Activated B cell treated with CpG ODN at 0.5 μM for 24 hours (primary cell): ENCODE measurements at regions of chr6 and their contacts with region 1.

Region 1: GRCh38 chr6:139028658-139029469 is at the start of gene ABRACL:
- DNase-seq: peak; percentile 83
- ATAC-seq: peak; percentile 71
- H3K4me3 Mint-ChIP-seq: no peak within 1 kb of the TSS
- H3K27ac Mint-ChIP-seq: peak within 1 kb of the TSS; percentile 95
- H3K4me1 Mint-ChIP-seq: peaks cover 14% of the 10 kb centered on the region
- H3K27me3 Mint-ChIP-seq: no peaks in the 10 kb centered on the region
- CTCF ChIP-seq: no peak
- total RNA-seq, gene ABRACL: 63.5 and 63.8 TPM in 2 replicates

Region 2: DNA sequence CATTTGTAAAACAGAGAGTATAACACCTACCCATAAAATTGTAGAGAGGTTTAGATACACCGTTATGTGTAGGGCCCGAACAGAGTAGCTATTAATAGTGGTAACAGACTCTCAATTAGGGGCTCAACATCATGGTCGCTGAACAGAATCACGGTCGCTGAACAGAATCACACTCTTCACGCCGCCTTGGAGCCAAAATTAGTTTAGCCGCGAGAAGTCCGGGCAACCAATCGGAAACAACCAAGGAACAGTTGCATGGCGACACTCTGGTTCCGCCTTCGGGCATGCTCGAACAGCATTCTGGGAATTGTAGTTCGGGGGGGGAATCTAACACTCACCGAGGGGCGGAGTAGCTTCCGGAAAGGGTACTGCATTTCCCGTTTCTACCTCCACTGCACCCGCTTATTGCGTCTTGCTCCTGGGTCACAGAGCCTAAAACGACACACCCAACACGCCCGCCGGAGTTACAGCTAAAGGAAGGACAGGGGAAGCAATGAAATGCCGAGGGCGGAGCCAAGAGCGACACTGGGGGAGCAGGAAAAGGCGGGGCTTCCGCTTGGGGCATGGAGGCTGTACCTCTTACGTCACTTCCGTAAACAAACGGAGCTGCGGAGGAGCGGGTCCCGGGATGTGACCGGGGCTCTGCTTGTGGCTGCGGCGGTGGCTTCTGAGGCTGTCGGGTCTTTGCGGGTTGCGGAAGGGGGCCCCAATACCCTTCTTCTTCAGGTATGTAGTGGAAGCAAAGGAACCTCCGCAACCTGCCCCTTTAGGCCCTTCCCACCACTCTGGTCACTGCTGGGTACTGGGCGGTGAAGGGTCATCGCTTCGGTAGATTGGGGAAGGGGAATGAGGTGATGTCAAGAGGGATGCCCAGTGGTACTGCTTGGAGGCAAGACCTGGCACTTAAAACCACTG is 255.4 kb before region 1 on chr6 and contains the start of gene CCDC28A:
- CTCF ChIA-PET with region 1: no interaction called
- POLR2A ChIA-PET with region 1: interaction called, 14 read pairs
- intact Hi-C with region 1: loop called (anchors 1 kb)
- DNase-seq: peak; percentile 90
- ATAC-seq: peak; percentile 85
- H3K4me3 Mint-ChIP-seq: peak within 1 kb of the TSS; percentile 100
- H3K27ac Mint-ChIP-seq: peak within 1 kb of the TSS; percentile 100
- H3K4me1 Mint-ChIP-seq: peaks cover 28% of the 10 kb centered on the region
- H3K27me3 Mint-ChIP-seq: no peaks in the 10 kb centered on the region
- CTCF ChIP-seq: no peak
- total RNA-seq, gene CCDC28A: 14.0 and 14.6 TPM in 2 replicates

Region 3: GRCh38 chr6:138869398-138869797 is 159.5 kb before region 1 on chr6:
- CTCF ChIA-PET with region 1: no interaction called
- POLR2A ChIA-PET with region 1: no interaction called
- intact Hi-C with region 1: no loop called
- DNase-seq: no peak
- ATAC-seq: no peak
- H3K4me3 Mint-ChIP-seq: no peak overlapping the region
- H3K27ac Mint-ChIP-seq: no peak overlapping the region
- H3K4me1 Mint-ChIP-seq: peaks cover 17% of the 10 kb centered on the region
- H3K27me3 Mint-ChIP-seq: no peaks in the 10 kb centered on the region
- CTCF ChIP-seq: no peak

Region 4: GRCh38 chr6:138979813-138980668 is 48.8 kb before region 1 on chr6:
- CTCF ChIA-PET with region 1: no interaction called
- POLR2A ChIA-PET with region 1: no interaction called
- intact Hi-C with region 1: no loop called
- DNase-seq: no peak
- ATAC-seq: peak; percentile 61
- H3K4me3 Mint-ChIP-seq: no peak overlapping the region
- H3K27ac Mint-ChIP-seq: no peak overlapping the region
- H3K4me1 Mint-ChIP-seq: peaks cover 37% of the 10 kb centered on the region
- H3K27me3 Mint-ChIP-seq: no peaks in the 10 kb centered on the region
- CTCF ChIP-seq: no peak

Region 5: GRCh38 chr6:139016337-139017213 is 12.3 kb before region 1 on chr6:
- CTCF ChIA-PET with region 1: no interaction called
- POLR2A ChIA-PET with region 1: interaction called, 43 read pairs
- intact Hi-C with region 1: loop called (anchors 1 kb)
- DNase-seq: no peak
- ATAC-seq: peak; percentile 96
- H3K4me3 Mint-ChIP-seq: no peak overlapping the region
- H3K27ac Mint-ChIP-seq: peak overlapping the region; percentile 46
- H3K4me1 Mint-ChIP-seq: peaks cover 20% of the 10 kb centered on the region
- H3K27me3 Mint-ChIP-seq: no peaks in the 10 kb centered on the region
- CTCF ChIP-seq: no peak

Region 6: DNA sequence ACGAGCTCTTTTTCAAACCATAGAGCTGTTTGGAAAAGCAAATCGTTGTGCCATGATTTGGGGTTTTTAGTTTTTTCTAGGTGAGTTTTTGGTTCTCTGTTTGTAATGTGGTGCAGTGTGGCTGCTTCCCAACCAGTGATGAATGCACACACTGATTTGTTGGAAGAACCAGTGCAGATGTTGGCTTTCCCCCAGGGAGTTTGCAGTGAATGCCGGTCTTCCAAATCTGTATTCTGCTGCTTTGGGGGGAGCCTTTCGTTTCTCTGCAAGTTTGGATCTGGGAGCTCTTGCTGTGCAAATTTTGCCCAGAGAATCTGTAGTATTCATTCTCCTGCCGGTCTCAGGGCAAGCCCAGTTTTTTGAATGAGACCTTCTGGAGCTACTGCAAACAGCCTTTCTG is 120.5 kb after region 1 on chr6:
- CTCF ChIA-PET with region 1: no interaction called
- POLR2A ChIA-PET with region 1: no interaction called
- intact Hi-C with region 1: no loop called
- DNase-seq: no peak
- ATAC-seq: no peak
- H3K4me3 Mint-ChIP-seq: no peak overlapping the region
- H3K27ac Mint-ChIP-seq: no peak overlapping the region
- H3K4me1 Mint-ChIP-seq: peaks cover 86% of the 10 kb centered on the region
- H3K27me3 Mint-ChIP-seq: no peaks in the 10 kb centered on the region
- CTCF ChIP-seq: no peak

Region 7: DNA sequence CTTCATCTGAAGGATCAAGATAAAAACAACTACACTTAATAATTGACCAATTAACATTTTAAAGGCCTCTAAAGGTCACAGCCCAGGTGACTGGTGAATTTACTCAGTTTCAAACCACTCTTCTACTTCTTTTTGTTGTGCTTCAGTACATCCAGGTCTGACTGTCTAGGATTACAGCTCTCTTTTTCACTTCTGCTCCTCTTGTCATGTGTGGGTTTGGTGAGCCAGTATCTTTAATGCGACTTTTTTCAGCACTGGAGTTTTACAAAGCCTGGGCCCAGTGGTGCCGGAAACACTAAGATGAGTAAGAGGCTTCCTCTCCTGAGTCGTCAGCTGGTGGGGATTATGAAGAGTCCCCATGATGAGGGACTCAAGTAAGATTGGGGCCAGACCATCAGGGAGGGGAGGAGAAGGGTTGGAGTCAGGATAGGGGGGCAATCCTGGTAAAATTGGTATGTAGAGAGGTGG is 133.0 kb after region 1 on chr6:
- CTCF ChIA-PET with region 1: no interaction called
- POLR2A ChIA-PET with region 1: interaction called, 3 read pairs
- intact Hi-C with region 1: loop called (anchors 1 kb)
- DNase-seq: peak; percentile 36
- ATAC-seq: peak; percentile 95
- H3K4me3 Mint-ChIP-seq: peak overlapping the region; percentile 66
- H3K27ac Mint-ChIP-seq: peak overlapping the region; percentile 94
- H3K4me1 Mint-ChIP-seq: peaks cover 77% of the 10 kb centered on the region
- H3K27me3 Mint-ChIP-seq: no peaks in the 10 kb centered on the region
- CTCF ChIP-seq: no peak

Region 8: DNA sequence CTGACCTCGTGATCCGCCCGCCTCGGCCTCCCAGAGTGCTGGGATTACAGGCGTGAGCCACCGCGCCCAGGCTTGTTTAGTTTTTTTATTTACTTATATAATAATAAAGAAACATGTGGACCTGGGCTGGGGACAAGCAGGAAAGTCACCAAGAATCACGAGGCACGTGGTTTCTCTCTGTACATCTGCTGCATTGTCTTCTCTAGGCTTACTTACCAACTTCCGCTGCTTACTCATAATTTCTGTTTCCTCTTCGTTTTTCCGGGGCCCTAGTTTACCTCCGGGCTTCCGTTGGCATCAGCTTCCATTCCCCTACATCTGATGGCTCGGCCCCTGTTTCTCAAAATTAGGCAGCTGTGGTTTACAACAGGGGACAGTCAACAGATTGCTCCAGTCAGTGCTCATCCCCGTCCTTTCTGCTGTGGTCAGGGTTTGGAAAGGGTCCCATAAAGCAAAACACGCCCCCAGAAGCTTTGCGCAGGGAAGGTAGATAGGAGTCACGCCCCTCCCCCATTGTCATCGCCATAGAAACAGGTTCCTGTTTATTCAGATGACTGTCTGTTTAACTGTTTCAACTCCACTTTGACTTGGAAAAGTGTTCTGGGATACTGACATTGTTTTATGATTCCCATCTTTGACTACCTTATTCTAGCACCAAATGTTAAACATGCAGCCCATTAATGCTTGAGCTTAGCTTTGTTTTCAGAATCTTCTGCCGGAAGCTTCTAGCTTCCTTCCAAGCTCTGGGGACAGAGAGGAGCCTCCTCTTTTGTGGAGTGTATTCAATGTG is 294.8 kb after region 1 on chr6:
- CTCF ChIA-PET with region 1: no interaction called
- POLR2A ChIA-PET with region 1: no interaction called
- intact Hi-C with region 1: loop called (anchors 1 kb)
- DNase-seq: peak; percentile 56
- ATAC-seq: peak; percentile 62
- H3K4me3 Mint-ChIP-seq: peak overlapping the region; percentile 85
- H3K27ac Mint-ChIP-seq: peak overlapping the region; percentile 89
- H3K4me1 Mint-ChIP-seq: peaks cover 45% of the 10 kb centered on the region
- H3K27me3 Mint-ChIP-seq: no peaks in the 10 kb centered on the region
- CTCF ChIP-seq: no peak

Region 9: GRCh38 chr6:139784222-139784769 is 755.4 kb after region 1 on chr6:
- CTCF ChIA-PET with region 1: no interaction called
- POLR2A ChIA-PET with region 1: no interaction called
- intact Hi-C with region 1: no loop called
- DNase-seq: no peak
- ATAC-seq: no peak
- H3K4me3 Mint-ChIP-seq: no peak overlapping the region
- H3K27ac Mint-ChIP-seq: no peak overlapping the region
- H3K4me1 Mint-ChIP-seq: no peaks in the 10 kb centered on the region
- H3K27me3 Mint-ChIP-seq: no peaks in the 10 kb centered on the region
- CTCF ChIP-seq: no peak